Endothelial cell of umbilical vein (primary cell): ENCODE measurements at regions of chr13 and their contacts with region 1.

Region 1: DNA sequence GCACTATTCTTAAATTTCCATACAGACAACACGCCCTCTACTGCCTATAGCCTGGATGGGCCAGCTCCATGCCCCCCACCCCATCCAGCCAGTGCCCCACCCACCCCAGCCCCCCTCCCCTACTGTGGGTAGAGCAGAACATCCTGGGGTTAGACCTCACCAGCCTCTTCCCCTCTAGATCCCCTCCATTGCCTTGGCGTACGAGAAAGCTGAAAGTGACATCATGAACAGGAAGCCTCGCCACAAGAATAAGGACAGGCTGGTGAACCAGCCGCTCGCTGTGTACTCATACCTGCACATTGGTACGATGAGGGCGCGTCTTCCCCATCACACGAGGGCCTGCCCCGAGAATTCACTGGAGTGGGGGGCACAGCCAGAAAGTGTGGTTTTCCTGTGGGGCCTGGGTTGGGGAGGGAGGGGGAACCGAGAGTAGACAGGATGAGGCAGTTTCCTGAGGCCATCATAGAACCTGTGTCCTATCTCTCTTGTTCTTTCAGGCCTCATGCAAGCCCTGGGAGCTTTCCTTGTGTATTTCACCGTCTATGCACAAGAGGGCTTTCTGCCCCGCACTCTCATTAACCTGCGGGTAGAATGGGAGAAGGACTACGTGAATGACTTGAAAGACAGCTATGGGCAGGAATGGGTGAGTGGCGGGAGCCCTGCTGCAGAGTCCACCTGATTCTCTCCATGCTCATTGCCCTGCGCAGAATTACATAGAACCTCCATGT is 29.1 kb downstream of the ATP12A start:
- DNase-seq: no peak
- H3K4me3 ChIP-seq: no peak overlapping the region
- H3K27ac ChIP-seq: no peak overlapping the region
- H3K4me1 ChIP-seq: no peaks in the 10 kb centered on the region
- H3K27me3 ChIP-seq: peaks cover 0 to 2% of the 10 kb centered on the region in 2 experiments
- CTCF ChIP-seq: no peak
- POLR2A ChIP-seq: no peak

Region 2: GRCh38 chr13:24693862-24694471 is 15.4 kb before region 1 on chr13:
- CTCF ChIA-PET with region 1: interaction called, 20 read pairs
- POLR2A ChIA-PET with region 1: no interaction called
- dilution Hi-C with region 1: no loop called
- intact Hi-C with region 1: no loop called
- DNase-seq: peak; percentile 47
- H3K4me3 ChIP-seq: no peak overlapping the region
- H3K27ac ChIP-seq: no peak overlapping the region
- H3K4me1 ChIP-seq: no peaks in the 10 kb centered on the region
- H3K27me3 ChIP-seq: peaks cover 0 to 2% of the 10 kb centered on the region in 2 experiments
- CTCF ChIP-seq: peak; percentile 68 to 69
- POLR2A ChIP-seq: no peak